Psoas muscle (tissue), 8 donors: ENCODE measurements at regions of chr12 and their contacts with region 1.

Region 1: DNA sequence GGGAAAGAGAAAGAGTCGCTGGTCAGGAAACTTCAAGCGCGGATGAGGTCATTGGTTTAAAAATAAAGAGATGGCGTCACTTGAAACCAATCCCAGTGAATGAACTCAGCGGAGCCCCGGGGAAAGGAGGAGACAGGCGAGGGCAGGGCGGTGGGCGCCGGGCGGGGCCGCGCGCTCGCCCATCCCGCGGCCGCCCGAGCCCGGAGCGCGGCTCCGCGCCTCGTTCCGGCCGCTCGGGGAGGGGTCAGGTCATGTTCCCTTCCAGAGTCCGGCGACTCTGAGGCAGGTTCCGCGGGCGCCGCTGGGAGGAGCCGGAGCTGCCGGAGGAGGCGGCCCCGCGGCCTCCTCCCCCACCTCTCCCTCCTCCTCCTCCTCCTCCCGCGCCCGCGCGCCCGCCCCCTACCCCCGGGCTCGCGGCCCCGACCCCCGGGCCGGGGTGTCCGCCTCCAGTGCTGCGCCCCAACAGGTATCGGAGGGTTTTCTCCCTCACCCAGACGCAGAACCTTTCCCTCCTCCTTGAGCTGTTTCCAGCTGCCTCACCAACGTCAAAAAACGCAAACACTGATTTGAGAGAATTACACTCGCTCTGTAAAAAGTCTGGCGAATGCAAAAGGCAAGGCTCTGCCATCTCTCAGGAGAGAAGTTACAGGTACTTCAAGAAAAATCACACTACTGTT is at the start of gene DUSP16:
- DNase-seq: peak; percentile 91 to 96
- ATAC-seq: peak; percentile 91 to 96 (median 94)
- H3K4me3 ChIP-seq: peak within 1 kb of the TSS; percentile 73
- H3K27ac ChIP-seq: peak within 1 kb of the TSS; percentile 98
- H3K4me1 ChIP-seq: peaks cover 20% of the 10 kb centered on the region
- H3K27me3 ChIP-seq: no peaks in the 10 kb centered on the region
- CTCF ChIP-seq: peak; percentile 28
- total RNA-seq, gene DUSP16: 14.2 to 23.8 (median 19.7) TPM

Region 2: DNA sequence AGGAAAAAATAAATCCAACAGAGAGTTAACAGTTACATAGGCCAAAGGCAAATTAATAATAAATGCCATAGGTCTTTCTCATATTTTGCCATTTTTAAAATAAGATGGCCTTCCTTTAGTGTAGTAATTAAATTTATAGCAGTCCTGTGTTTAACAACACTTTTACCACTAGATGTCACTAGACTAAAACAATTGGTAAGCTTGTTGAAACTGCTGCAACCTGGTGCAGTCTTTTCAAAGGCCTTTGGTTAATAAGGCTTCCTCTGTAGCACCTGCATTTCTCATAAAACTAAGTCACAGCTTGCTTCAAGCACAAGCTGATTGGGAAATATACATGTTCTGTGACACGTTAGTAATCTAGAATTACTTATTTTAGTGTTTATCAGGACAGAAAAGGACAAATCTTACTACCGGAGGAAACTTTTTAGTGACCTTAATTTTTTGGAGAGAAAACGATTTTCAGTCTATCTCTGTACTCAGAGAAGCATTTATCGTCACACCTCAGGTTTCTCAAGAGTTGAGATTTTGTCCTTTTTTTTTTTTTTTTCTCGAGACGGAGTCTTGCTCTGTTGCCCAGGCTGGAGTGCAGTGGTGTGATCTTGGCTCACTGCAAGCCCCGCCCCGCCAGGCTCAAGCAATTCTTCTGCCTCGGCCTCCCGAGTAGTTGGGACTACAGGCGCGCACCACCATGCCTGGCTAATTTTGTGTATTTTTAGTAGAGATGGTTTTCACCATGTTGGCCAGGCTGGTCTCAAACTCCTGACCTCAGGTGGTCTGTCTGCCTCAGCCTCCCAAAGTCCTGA is 185.9 kb before region 1 on chr12:
- intact Hi-C with region 1: loop called (anchors 1 to 5 kb)
- DNase-seq: no peak
- ATAC-seq: peak; percentile 76 to 92 (median 82)
- H3K4me3 ChIP-seq: no peak overlapping the region
- H3K27ac ChIP-seq: no peak overlapping the region
- H3K4me1 ChIP-seq: peaks cover 5% of the 10 kb centered on the region
- H3K27me3 ChIP-seq: no peaks in the 10 kb centered on the region
- CTCF ChIP-seq: peak; percentile 79

Region 3: GRCh38 chr12:12521044-12521485 is 41.7 kb before region 1 on chr12:
- intact Hi-C with region 1: loop called in 1 of 2 experiments (anchors 5 kb)
- DNase-seq: no peak
- ATAC-seq: no peak
- H3K4me3 ChIP-seq: peak overlapping the region; percentile 24
- H3K27ac ChIP-seq: peak overlapping the region; percentile 64
- H3K4me1 ChIP-seq: peaks cover 62% of the 10 kb centered on the region
- H3K27me3 ChIP-seq: no peaks in the 10 kb centered on the region
- CTCF ChIP-seq: no peak

Region 4: DNA sequence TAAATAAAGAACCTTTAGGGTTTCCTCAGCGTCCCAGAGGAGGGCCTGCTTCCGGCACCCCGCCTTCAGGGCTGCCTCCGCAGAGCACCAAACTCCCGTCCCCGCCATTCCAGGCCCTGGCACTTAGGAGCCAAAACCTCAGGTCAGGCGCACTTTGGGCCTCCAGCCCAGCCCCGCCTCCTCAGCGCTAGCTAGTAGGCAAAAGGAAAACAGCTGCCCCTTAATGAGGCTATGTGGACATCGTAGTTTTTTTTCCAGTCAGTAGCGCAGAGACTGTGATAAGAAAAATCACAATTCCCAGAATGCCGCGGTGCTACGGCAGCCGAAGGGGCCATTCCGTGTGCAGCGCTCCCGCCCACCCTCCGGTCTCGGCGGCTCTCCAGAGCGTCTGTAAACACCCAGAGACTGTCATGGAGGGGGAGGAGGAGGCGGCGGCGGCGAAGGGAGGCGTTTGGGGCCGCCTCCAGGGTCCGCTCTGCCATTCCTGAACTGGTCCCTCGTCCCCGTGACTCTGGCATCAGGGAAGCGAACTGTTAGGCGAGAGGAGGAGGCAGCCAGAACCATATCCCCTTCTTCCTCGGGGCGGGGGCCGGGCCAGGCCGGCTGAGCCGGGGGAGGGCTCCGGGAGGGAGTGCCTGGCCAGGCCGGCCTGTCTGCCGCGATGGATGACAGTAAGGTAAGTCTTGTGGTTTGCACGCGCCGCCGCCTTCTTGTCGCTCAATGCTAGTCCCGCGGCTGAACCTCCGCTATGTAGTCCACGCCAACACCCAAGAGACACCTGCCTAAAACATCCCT is 49.0 kb after region 1 on chr12 and contains the start of gene CREBL2:
- intact Hi-C with region 1: loop called in 1 of 2 experiments (anchors 5 kb)
- DNase-seq: peak; percentile 96 to 98
- ATAC-seq: peak; percentile 96 to 98 (median 98)
- H3K4me3 ChIP-seq: peak within 1 kb of the TSS; percentile 87
- H3K27ac ChIP-seq: peak within 1 kb of the TSS; percentile 95
- H3K4me1 ChIP-seq: peaks cover 29% of the 10 kb centered on the region
- H3K27me3 ChIP-seq: no peaks in the 10 kb centered on the region
- CTCF ChIP-seq: no peak
- total RNA-seq, gene CREBL2: 6.1 to 9.2 (median 7.3) TPM

Region 5: GRCh38 chr12:12696562-12697383 is 134.1 kb after region 1 on chr12:
- intact Hi-C with region 1: loop called in 1 of 2 experiments (anchors 5 kb)
- DNase-seq: peak; percentile 89 to 96
- ATAC-seq: peak; percentile 90 to 97 (median 92)
- H3K4me3 ChIP-seq: peak overlapping the region; percentile 69
- H3K27ac ChIP-seq: peak overlapping the region; percentile 94
- H3K4me1 ChIP-seq: peaks cover 7% of the 10 kb centered on the region
- H3K27me3 ChIP-seq: no peaks in the 10 kb centered on the region
- CTCF ChIP-seq: no peak

Region 6: GRCh38 chr12:12736759-12737676 is 174.3 kb after region 1 on chr12:
- intact Hi-C with region 1: no loop called
- DNase-seq: no peak
- ATAC-seq: peak; percentile 48 to 89 (median 80)
- H3K4me3 ChIP-seq: peak overlapping the region; percentile 33
- H3K27ac ChIP-seq: no peak overlapping the region
- H3K4me1 ChIP-seq: no peaks in the 10 kb centered on the region
- H3K27me3 ChIP-seq: no peaks in the 10 kb centered on the region
- CTCF ChIP-seq: peak; percentile 55